HCT116 (cell line): ENCODE measurements at regions of chr12 and their contacts with region 1.

Region 1: GRCh38 chr12:85866986-85867776 is 6.9 kb upstream of the NTS start:
- DNase-seq: peak; percentile 47
- ATAC-seq: peak; percentile 86
- H3K4me3 ChIP-seq: no peak overlapping the region
- H3K27ac ChIP-seq: no peak overlapping the region
- H3K4me1 ChIP-seq: no peaks in the 10 kb centered on the region
- H3K27me3 ChIP-seq: no peaks in the 10 kb centered on the region
- CTCF ChIP-seq: peak; percentile 66 to 75 (median 74)
- POLR2A ChIP-seq: no peak
- RAD21 ChIP-seq: peak; percentile 87

Region 2: DNA sequence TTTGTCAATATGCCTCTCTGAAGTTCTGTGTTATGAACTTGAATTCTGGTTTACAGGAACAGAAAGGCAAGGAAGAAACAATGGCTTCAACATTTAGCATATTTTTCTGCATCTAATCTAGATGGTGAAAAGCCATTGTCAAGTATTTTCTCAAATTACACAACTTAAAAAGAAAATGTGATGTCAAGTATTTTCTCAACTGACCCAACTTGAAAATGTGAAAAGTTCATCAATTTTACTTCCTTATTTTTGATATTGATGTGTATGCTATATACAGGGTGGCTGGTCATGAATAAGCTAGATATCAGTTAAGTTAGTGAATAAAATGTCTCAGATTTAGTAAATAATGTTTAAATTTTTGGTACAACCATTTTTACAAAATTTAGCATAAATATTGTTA is 390.4 kb before region 1 on chr12:
- CTCF ChIA-PET with region 1: interaction called, 20 read pairs
- POLR2A ChIA-PET with region 1: no interaction called
- RAD21 ChIA-PET with region 1: interaction called in 1 of 2 experiments, 5 read pairs
- intact Hi-C with region 1: no loop called
- DNase-seq: no peak
- ATAC-seq: no peak
- H3K4me3 ChIP-seq: no peak overlapping the region
- H3K27ac ChIP-seq: no peak overlapping the region
- H3K4me1 ChIP-seq: no peaks in the 10 kb centered on the region
- H3K27me3 ChIP-seq: no peaks in the 10 kb centered on the region
- CTCF ChIP-seq: no peak
- POLR2A ChIP-seq: no peak
- RAD21 ChIP-seq: no peak

Region 3: GRCh38 chr12:85575120-85576096 is 291.8 kb before region 1 on chr12:
- CTCF ChIA-PET with region 1: interaction called, 70 read pairs
- POLR2A ChIA-PET with region 1: no interaction called
- RAD21 ChIA-PET with region 1: interaction called, 6 to 8 read pairs
- intact Hi-C with region 1: loop called (anchors 1 kb)
- DNase-seq: peak; percentile 54
- ATAC-seq: peak; percentile 99
- H3K4me3 ChIP-seq: no peak overlapping the region
- H3K27ac ChIP-seq: no peak overlapping the region
- H3K4me1 ChIP-seq: no peaks in the 10 kb centered on the region
- H3K27me3 ChIP-seq: no peaks in the 10 kb centered on the region
- CTCF ChIP-seq: peak; percentile 68 to 83 (median 70); a peak in 5 of 6 replicates
- POLR2A ChIP-seq: no peak
- RAD21 ChIP-seq: peak; percentile 83

Region 4: GRCh38 chr12:85825746-85826145 is 41.4 kb before region 1 on chr12:
- CTCF ChIA-PET with region 1: no interaction called
- POLR2A ChIA-PET with region 1: no interaction called
- RAD21 ChIA-PET with region 1: no interaction called
- intact Hi-C with region 1: no loop called
- DNase-seq: no peak
- ATAC-seq: no peak
- H3K4me3 ChIP-seq: no peak overlapping the region
- H3K27ac ChIP-seq: no peak overlapping the region
- H3K4me1 ChIP-seq: no peaks in the 10 kb centered on the region
- H3K27me3 ChIP-seq: no peaks in the 10 kb centered on the region
- CTCF ChIP-seq: no peak
- POLR2A ChIP-seq: no peak
- RAD21 ChIP-seq: no peak

Region 5: DNA sequence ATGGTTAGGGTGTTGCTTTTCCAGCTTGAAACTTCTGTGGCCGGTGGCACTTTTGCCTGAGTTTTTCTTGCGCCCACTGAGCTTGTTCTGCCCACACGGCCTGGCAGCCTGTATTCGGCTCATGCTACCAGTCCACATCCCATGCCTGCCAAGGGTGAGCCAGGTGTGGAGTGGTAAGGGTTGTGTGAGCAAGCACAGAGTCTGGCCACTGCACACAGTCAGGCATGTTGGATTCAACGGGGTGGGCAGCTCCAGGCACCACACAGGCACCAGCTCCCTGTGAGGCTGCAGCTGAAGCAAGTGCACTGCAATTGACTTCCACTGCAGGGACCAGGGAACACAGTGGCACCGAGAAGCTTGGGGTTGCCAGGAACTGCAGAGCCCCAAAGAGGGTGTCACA is 11.9 kb before region 1 on chr12:
- CTCF ChIA-PET with region 1: interaction called, 18 read pairs
- POLR2A ChIA-PET with region 1: no interaction called
- RAD21 ChIA-PET with region 1: no interaction called
- intact Hi-C with region 1: no loop called
- DNase-seq: no peak
- ATAC-seq: no peak
- H3K4me3 ChIP-seq: no peak overlapping the region
- H3K27ac ChIP-seq: no peak overlapping the region
- H3K4me1 ChIP-seq: no peaks in the 10 kb centered on the region
- H3K27me3 ChIP-seq: no peaks in the 10 kb centered on the region
- CTCF ChIP-seq: no peak
- POLR2A ChIP-seq: no peak
- RAD21 ChIP-seq: no peak